ENCODE measurements at regions of chrX and their contacts with region 1.

Region 1: DNA sequence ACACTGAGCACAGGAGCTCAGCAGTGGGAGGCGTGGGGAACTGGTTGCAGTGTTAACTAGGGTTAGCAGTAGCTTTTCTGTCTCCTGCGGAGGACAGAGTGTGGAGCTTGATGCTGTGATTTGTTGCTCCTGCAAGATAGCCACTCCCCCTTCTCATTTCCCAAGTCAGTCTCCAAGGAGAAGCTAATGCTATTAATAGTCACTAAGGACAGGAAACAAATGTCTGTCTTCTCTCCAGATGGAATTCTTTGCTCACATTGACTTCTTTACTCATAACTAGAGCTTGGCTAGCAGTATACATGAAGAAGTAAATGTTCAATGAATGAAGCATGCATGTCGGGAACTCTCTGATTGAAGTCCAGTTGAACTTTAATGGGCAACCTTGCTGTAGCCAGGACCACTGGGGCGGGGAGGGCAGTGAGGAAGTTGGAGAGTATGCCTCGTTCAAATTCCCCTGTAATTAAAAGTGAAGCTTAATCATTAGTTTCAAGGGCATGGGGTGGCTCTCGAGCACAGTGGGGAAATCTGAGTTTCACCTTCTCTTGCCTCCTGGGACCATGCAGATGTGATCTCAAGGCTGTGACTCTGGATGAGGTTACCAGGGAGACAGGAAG is 156.6 kb upstream of the SCML1 start:
- DNase-seq: peak in 2 of 5 donors; percentile 20 to 27
- ATAC-seq: peak; percentile 51 to 86 (median 84)
- H3K4me3 ChIP-seq: no peak overlapping the region
- H3K27ac ChIP-seq: peak overlapping the region in 4 of 12 donors; percentile 18 to 48 (median 38)
- H3K4me1 ChIP-seq: peaks cover 0 to 17% (median 4%) of the 10 kb centered on the region in 12 donors
- H3K27me3 ChIP-seq: peaks cover 0 to 7% (median 0%) of the 10 kb centered on the region in 9 donors
- CTCF ChIP-seq: no peak
- POLR2A ChIP-seq: no peak

Region 2: GRCh38 chrX:17535229-17535628 is 45.4 kb before region 1 on chrX:
- intact Hi-C with region 1: loop called in 2 of 10 experiments (anchors 10 kb)
- DNase-seq: no peak
- ATAC-seq: no peak
- H3K4me3 ChIP-seq: no peak overlapping the region
- H3K27ac ChIP-seq: no peak overlapping the region
- H3K4me1 ChIP-seq: no peaks in the 10 kb centered on the region
- H3K27me3 ChIP-seq: peaks cover 0 to 15% (median 0%) of the 10 kb centered on the region in 9 donors
- CTCF ChIP-seq: peak; percentile 15 to 50 (median 39)
- POLR2A ChIP-seq: no peak

Region 3: GRCh38 chrX:17674601-17675000 is 94.0 kb after region 1 on chrX:
- intact Hi-C with region 1: no loop called
- DNase-seq: no peak
- ATAC-seq: no peak
- H3K4me3 ChIP-seq: no peak overlapping the region
- H3K27ac ChIP-seq: no peak overlapping the region
- H3K4me1 ChIP-seq: no peaks in the 10 kb centered on the region
- H3K27me3 ChIP-seq: peaks cover 0 to 11% (median 0%) of the 10 kb centered on the region in 9 donors
- CTCF ChIP-seq: no peak
- POLR2A ChIP-seq: no peak

Region 4: GRCh38 chrX:17744896-17745523 is 164.4 kb after region 1 on chrX:
- intact Hi-C with region 1: no loop called
- DNase-seq: no peak
- ATAC-seq: no peak
- H3K4me3 ChIP-seq: no peak overlapping the region
- H3K27ac ChIP-seq: no peak overlapping the region
- H3K4me1 ChIP-seq: peaks cover 0 to 4% (median 0%) of the 10 kb centered on the region in 12 donors
- H3K27me3 ChIP-seq: peaks cover 0 to 11% (median 0%) of the 10 kb centered on the region in 9 donors
- CTCF ChIP-seq: peak in 11 of 12 donors; percentile 22 to 45 (median 34)
- POLR2A ChIP-seq: no peak